ENCODE measurements at regions of chr2 and their contacts with region 1.

Region 1: GRCh38 chr2:68709421-68709911 is 25.1 kb upstream of the ARHGAP25 start:
- DNase-seq: no peak
- ATAC-seq: peak; percentile 62
- H3K4me3 ChIP-seq: no peak overlapping the region
- H3K27ac ChIP-seq: no peak overlapping the region
- H3K4me1 ChIP-seq: no peaks in the 10 kb centered on the region
- H3K27me3 ChIP-seq: no peaks in the 10 kb centered on the region

Region 2: GRCh38 chr2:68918497-68918896 is 209.0 kb after region 1 on chr2:
- intact Hi-C with region 1: loop called in 1 of 2 experiments (anchors 5 kb)
- DNase-seq: no peak
- ATAC-seq: no peak
- H3K4me3 ChIP-seq: no peak overlapping the region
- H3K27ac ChIP-seq: no peak overlapping the region
- H3K4me1 ChIP-seq: no peaks in the 10 kb centered on the region
- H3K27me3 ChIP-seq: no peaks in the 10 kb centered on the region

Region 3: GRCh38 chr2:68961380-68961779 is 251.9 kb after region 1 on chr2:
- intact Hi-C with region 1: no loop called
- DNase-seq: no peak
- ATAC-seq: no peak
- H3K4me3 ChIP-seq: no peak overlapping the region
- H3K27ac ChIP-seq: no peak overlapping the region
- H3K4me1 ChIP-seq: no peaks in the 10 kb centered on the region
- H3K27me3 ChIP-seq: no peaks in the 10 kb centered on the region

Measured in aorta (tissue), 5 donors.